Activated B cell treated with CpG ODN at 0.5 μM for 24 hours (primary cell): ENCODE measurements at regions of chr3 and their contacts with region 1.

Region 1: DNA sequence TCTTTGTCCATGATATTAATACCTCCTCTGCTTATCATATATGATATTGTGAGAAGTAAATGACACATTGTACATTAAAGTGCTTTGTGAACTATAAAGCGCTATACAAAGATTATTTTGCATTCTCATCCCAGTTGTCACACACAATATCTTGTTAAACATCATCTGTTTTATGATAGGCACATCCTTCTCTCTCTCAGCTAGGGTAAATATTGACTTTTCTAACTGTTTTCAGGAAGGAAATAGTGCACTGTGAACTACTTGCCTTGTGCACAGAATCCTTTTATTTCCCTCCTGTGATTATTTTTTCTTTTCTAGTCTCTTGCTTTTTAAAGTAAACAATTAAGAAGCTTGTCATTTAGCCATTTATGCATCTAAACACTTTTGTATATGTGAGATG is 388.2 kb downstream of the LPP start:
- DNase-seq: no peak
- ATAC-seq: no peak
- H3K4me3 Mint-ChIP-seq: no peak overlapping the region
- H3K27ac Mint-ChIP-seq: no peak overlapping the region
- H3K4me1 Mint-ChIP-seq: peaks cover 7% of the 10 kb centered on the region
- H3K27me3 Mint-ChIP-seq: no peaks in the 10 kb centered on the region
- CTCF ChIP-seq: no peak

Region 2: GRCh38 chr3:188526057-188526456 is 16.1 kb before region 1 on chr3:
- CTCF ChIA-PET with region 1: no interaction called
- POLR2A ChIA-PET with region 1: no interaction called
- intact Hi-C with region 1: loop called (anchors 2 kb)
- DNase-seq: no peak
- ATAC-seq: no peak
- H3K4me3 Mint-ChIP-seq: no peak overlapping the region
- H3K27ac Mint-ChIP-seq: no peak overlapping the region
- H3K4me1 Mint-ChIP-seq: peaks cover 15% of the 10 kb centered on the region
- H3K27me3 Mint-ChIP-seq: no peaks in the 10 kb centered on the region
- CTCF ChIP-seq: no peak

Region 3: GRCh38 chr3:188557235-188557634 is 15.0 kb after region 1 on chr3:
- CTCF ChIA-PET with region 1: no interaction called
- POLR2A ChIA-PET with region 1: interaction called, 3 read pairs
- intact Hi-C with region 1: loop called (anchors 2 kb)
- DNase-seq: no peak
- ATAC-seq: no peak
- H3K4me3 Mint-ChIP-seq: no peak overlapping the region
- H3K27ac Mint-ChIP-seq: no peak overlapping the region
- H3K4me1 Mint-ChIP-seq: peaks cover 11% of the 10 kb centered on the region
- H3K27me3 Mint-ChIP-seq: no peaks in the 10 kb centered on the region
- CTCF ChIP-seq: no peak